HEK293 (cell line): ENCODE measurements at regions of chr6 and their contacts with region 1.

Region 1: GRCh38 chr6:29011276-29011734 is 6.2 kb upstream of the ZNF311 start:
- H3K4me3 ChIP-seq: peak overlapping the region; percentile 60
- H3K27ac ChIP-seq: no peak overlapping the region
- H3K4me1 ChIP-seq: no peaks in the 10 kb centered on the region
- CTCF ChIP-seq: no peak

Region 2: GRCh38 chr6:28673800-28674671 is 337.3 kb before region 1 on chr6:
- CTCF ChIA-PET with region 1: no interaction called
- POLR2A ChIA-PET with region 1: no interaction called
- H3K4me3 ChIP-seq: peak overlapping the region; percentile 40
- H3K27ac ChIP-seq: peak overlapping the region; percentile 5; the same call in 1 of the 2 replicates
- H3K4me1 ChIP-seq: no peaks in the 10 kb centered on the region
- CTCF ChIP-seq: no peak

Region 3: GRCh38 chr6:28981833-28982475 is 29.4 kb before region 1 on chr6:
- CTCF ChIA-PET with region 1: interaction called, 19 read pairs
- POLR2A ChIA-PET with region 1: interaction called, 20 read pairs
- H3K4me3 ChIP-seq: peak overlapping the region; percentile 73
- H3K27ac ChIP-seq: no peak overlapping the region
- H3K4me1 ChIP-seq: peaks cover 5% of the 10 kb centered on the region; the same call in 1 of the 2 replicates
- CTCF ChIP-seq: peak; percentile 50; the same call in 1 of the 2 replicates

Region 4: GRCh38 chr6:29092957-29093356 is 81.7 kb after region 1 on chr6:
- CTCF ChIA-PET with region 1: no interaction called
- POLR2A ChIA-PET with region 1: no interaction called
- H3K4me3 ChIP-seq: no peak overlapping the region
- H3K27ac ChIP-seq: no peak overlapping the region
- H3K4me1 ChIP-seq: no peaks in the 10 kb centered on the region
- CTCF ChIP-seq: no peak